ENCODE measurements at regions of chr4 and their contacts with region 1.

Region 1: GRCh38 chr4:69617083-69617694 is 22.3 kb downstream of the UGT2A2 start:
- DNase-seq: peak; percentile 13
- H3K4me3 ChIP-seq: no peak overlapping the region
- H3K27ac ChIP-seq: no peak overlapping the region
- H3K4me1 ChIP-seq: no peaks in the 10 kb centered on the region
- H3K27me3 ChIP-seq: no peaks in the 10 kb centered on the region
- CTCF ChIP-seq: peak in 3 of 4 experiments; percentile 46 to 78 (median 68)
- POLR2A ChIP-seq: no peak

Region 2: GRCh38 chr4:69322055-69322454 is 295.1 kb before region 1 on chr4:
- intact Hi-C with region 1: loop called (anchors 5 kb)
- DNase-seq: no peak
- H3K4me3 ChIP-seq: no peak overlapping the region
- H3K27ac ChIP-seq: no peak overlapping the region
- H3K4me1 ChIP-seq: no peaks in the 10 kb centered on the region
- H3K27me3 ChIP-seq: no peaks in the 10 kb centered on the region
- CTCF ChIP-seq: no peak
- POLR2A ChIP-seq: no peak

Region 3: GRCh38 chr4:69743476-69744156 is 126.4 kb after region 1 on chr4:
- intact Hi-C with region 1: no loop called
- DNase-seq: no peak
- H3K4me3 ChIP-seq: no peak overlapping the region
- H3K27ac ChIP-seq: no peak overlapping the region
- H3K4me1 ChIP-seq: no peaks in the 10 kb centered on the region
- H3K27me3 ChIP-seq: no peaks in the 10 kb centered on the region
- CTCF ChIP-seq: no peak
- POLR2A ChIP-seq: no peak

Measured in prostate gland (tissue), 2 donors.